CD8-positive, alpha-beta memory T cell (primary cell): ENCODE measurements at regions of chr15 and their contacts with region 1.

Region 1: DNA sequence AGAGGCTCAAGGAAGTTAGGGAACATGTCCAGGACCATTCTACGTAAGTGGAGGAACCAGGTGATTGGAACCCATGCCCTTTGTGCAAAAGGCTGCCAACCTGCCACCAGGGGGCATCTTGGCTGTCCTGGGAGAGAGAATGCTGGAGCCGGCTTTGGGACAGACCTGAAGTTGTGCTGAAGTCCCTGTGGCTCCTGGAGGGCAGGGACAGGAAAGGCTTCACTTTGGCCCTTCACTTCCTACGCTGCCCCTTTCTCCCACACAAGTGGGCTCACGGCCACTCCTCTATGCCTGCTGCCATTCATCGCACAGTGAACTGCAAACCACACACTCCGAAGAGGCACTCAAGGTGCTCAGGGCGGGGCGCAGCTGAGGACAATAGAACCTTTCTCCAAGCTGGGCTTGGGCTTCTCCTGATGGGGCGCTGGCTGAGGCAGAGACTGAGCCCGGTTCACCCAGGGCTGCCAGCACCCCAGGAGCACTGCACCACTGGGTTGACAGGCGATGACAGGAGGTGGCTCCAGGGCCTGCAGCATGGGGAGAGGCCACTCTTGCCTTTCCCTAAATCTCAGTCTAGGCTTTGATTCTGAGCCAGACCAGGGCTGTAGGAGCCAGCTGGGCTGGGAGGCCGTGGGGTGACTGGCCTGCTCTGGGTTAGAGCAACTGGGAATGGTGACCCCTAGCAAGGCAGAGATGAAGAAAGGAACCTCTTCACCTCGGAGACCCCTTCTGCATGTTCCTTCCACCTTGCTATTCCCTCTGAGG is 8.4 kb downstream of the SHF start:
- DNase-seq: peak; percentile 33 to 73 (median 38)
- H3K4me3 ChIP-seq: no peak overlapping the region
- H3K4me3 Mint-ChIP-seq: no peak overlapping the region
- H3K27ac ChIP-seq: no peak overlapping the region
- H3K27ac Mint-ChIP-seq: peak overlapping the region in 4 of 8 donors; percentile 16 to 40 (median 22)
- H3K4me1 ChIP-seq: peaks cover 7% of the 10 kb centered on the region
- H3K4me1 Mint-ChIP-seq: peaks cover 11 to 15% (median 14%) of the 10 kb centered on the region in 3 donors
- H3K27me3 ChIP-seq: no peaks in the 10 kb centered on the region
- H3K27me3 Mint-ChIP-seq: no peaks in the 10 kb centered on the region

Region 2: DNA sequence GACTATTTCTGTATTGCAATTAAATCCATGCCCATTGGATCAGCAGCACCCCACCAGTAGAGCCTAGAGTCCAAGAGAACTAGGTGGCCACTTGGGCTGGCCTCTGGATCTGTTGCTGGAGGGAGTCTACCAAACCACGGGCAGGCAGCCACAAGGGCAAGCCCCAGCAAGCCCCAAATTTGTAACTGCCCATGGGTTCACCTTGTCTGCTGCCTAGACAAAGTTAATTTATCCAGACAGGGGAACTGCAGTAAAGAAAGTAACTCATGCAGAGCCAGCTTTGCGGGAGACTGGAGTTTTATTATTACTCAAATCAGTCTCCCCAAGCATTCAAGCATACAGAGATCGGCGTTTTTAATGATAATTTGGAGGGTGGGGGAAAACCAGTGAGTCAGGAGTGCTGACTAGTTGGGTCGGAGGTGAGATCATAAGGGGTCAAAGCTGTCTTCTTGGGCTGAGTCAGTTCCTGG is 296.9 kb before region 1 on chr15:
- CTCF ChIA-PET with region 1: no interaction called
- POLR2A ChIA-PET with region 1: no interaction called
- DNase-seq: no peak
- H3K4me3 ChIP-seq: no peak overlapping the region
- H3K4me3 Mint-ChIP-seq: peak overlapping the region in 3 of 7 donors; percentile 2 to 34 (median 5)
- H3K27ac ChIP-seq: no peak overlapping the region
- H3K27ac Mint-ChIP-seq: peak overlapping the region in 1 of 8 donors; percentile 1
- H3K4me1 ChIP-seq: no peaks in the 10 kb centered on the region
- H3K4me1 Mint-ChIP-seq: peaks cover 7 to 23% (median 18%) of the 10 kb centered on the region in 3 donors
- H3K27me3 ChIP-seq: no peaks in the 10 kb centered on the region
- H3K27me3 Mint-ChIP-seq: peaks cover 5 to 9% of the 10 kb centered on the region in 2 donors

Region 3: GRCh38 chr15:45205192-45205591 is 25.8 kb after region 1 on chr15:
- CTCF ChIA-PET with region 1: interaction called, 19 read pairs
- POLR2A ChIA-PET with region 1: interaction called, 3 read pairs
- DNase-seq: peak; percentile 15 to 64 (median 32)
- H3K4me3 ChIP-seq: no peak overlapping the region
- H3K4me3 Mint-ChIP-seq: peak overlapping the region in 1 of 7 donors; percentile 41
- H3K27ac ChIP-seq: no peak overlapping the region
- H3K27ac Mint-ChIP-seq: peak overlapping the region in 4 of 8 donors; percentile 16 to 58 (median 39)
- H3K4me1 ChIP-seq: peaks cover 8% of the 10 kb centered on the region
- H3K4me1 Mint-ChIP-seq: peaks cover 0 to 3% (median 0%) of the 10 kb centered on the region in 3 donors
- H3K27me3 ChIP-seq: no peaks in the 10 kb centered on the region
- H3K27me3 Mint-ChIP-seq: peaks cover 12 to 24% of the 10 kb centered on the region in 2 donors